Left lung (tissue), 14 donors: ENCODE measurements at regions of chr19 and their contacts with region 1.

Region 1: GRCh38 chr19:13262450-13262849 is 112.2 kb downstream of the IER2 start:
- DNase-seq: peak in 2 of 4 donors; percentile 46 to 67
- ATAC-seq: peak; percentile 82
- H3K4me3 ChIP-seq: no peak overlapping the region
- H3K27ac ChIP-seq: no peak overlapping the region
- H3K4me1 ChIP-seq: peaks cover 0 to 10% of the 10 kb centered on the region in 2 donors
- H3K27me3 ChIP-seq: peaks cover 0 to 11% of the 10 kb centered on the region in 2 donors
- CTCF ChIP-seq: peak; percentile 47 to 55

Region 2: GRCh38 chr19:12974301-12975220 is 287.9 kb before region 1 on chr19:
- intact Hi-C with region 1: loop called in 1 of 2 experiments (anchors 10 kb)
- DNase-seq: no peak
- ATAC-seq: no peak
- H3K4me3 ChIP-seq: no peak overlapping the region
- H3K27ac ChIP-seq: no peak overlapping the region
- H3K4me1 ChIP-seq: no peaks in the 10 kb centered on the region
- H3K27me3 ChIP-seq: no peaks in the 10 kb centered on the region
- CTCF ChIP-seq: no peak

Region 3: GRCh38 chr19:13195678-13196077 is 66.8 kb before region 1 on chr19:
- intact Hi-C with region 1: loop called in 1 of 2 experiments (anchors 10 kb)
- DNase-seq: no peak
- ATAC-seq: peak; percentile 66
- H3K4me3 ChIP-seq: no peak overlapping the region
- H3K27ac ChIP-seq: no peak overlapping the region
- H3K4me1 ChIP-seq: peaks cover 0 to 14% of the 10 kb centered on the region in 2 donors
- H3K27me3 ChIP-seq: no peaks in the 10 kb centered on the region
- CTCF ChIP-seq: no peak